ENCODE measurements at regions of chr15 and their contacts with region 1.

Region 1: GRCh38 chr15:51874751-51875528 is 45.5 kb downstream of the TMOD3 start:
- DNase-seq: peak in 1 of 2 donors; percentile 40
- ATAC-seq: peak in 7 of 8 donors; percentile 34 to 84 (median 76)
- H3K4me3 ChIP-seq: no peak overlapping the region
- H3K27ac ChIP-seq: peak overlapping the region in 7 of 10 donors; percentile 9 to 67 (median 54)
- H3K4me1 ChIP-seq: peaks cover 0 to 48% (median 28%) of the 10 kb centered on the region in 9 donors
- H3K27me3 ChIP-seq: no peaks in the 10 kb centered on the region
- CTCF ChIP-seq: no peak

Region 2: DNA sequence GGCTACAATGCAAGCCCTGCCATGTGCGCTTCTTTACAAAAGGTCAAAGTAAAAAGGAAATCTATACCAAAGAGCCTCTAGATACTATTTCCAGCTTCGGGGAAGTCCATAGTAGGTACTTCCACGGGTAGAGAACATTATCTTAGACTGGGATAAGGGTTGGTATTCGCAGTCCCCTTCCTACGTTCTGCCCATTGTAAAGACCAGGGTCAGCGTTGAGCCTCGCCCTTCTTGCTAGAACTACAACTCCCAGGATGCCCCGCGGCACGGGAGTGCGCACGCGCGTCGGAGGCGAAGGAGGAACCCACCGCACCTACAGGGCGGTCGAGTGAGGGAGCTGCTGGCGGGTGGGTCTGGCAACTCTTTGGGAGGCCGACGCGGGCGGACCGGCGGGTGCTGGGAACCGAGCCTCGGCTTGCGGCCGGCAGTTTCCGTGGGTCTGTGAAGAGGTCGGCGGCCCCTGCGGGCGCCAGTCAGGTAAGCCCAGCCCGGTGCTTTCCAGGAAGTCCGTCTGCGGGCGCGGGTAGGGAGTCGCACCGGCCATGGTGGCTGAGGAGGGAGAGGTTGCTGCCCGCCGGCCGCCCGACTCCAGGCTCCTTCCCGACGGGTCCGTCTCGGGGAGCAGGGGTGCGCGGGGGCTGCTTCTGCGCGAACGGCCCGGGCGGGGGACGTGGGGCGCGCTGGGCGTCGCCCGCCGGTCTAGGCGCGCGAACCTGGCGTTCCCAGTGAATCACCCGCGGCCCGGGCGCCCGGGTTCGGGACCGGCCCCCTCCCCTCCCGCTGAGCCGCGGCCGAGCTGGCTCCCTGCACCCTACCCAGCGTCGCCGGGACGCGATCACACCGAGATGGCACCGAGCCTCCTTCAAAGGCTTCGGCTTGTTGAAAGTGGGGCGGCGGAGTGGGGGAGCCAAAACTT is 45.3 kb before region 1 on chr15 and contains the start of gene TMOD3:
- intact Hi-C with region 1: loop called in 3 of 10 experiments (anchors 5 kb)
- DNase-seq: peak; percentile 92 to 97
- ATAC-seq: peak; percentile 97 to 99 (median 98)
- H3K4me3 ChIP-seq: peak within 1 kb of the TSS; percentile 77 to 99 (median 92)
- H3K27ac ChIP-seq: peak within 1 kb of the TSS; percentile 82 to 99 (median 95)
- H3K4me1 ChIP-seq: peaks cover 0 to 42% (median 38%) of the 10 kb centered on the region in 9 donors
- H3K27me3 ChIP-seq: no peaks in the 10 kb centered on the region
- CTCF ChIP-seq: peak in 2 of 9 donors; percentile 12 to 21
- total RNA-seq, gene TMOD3: 15.2 to 28.7 (median 18.2) TPM

Region 3: DNA sequence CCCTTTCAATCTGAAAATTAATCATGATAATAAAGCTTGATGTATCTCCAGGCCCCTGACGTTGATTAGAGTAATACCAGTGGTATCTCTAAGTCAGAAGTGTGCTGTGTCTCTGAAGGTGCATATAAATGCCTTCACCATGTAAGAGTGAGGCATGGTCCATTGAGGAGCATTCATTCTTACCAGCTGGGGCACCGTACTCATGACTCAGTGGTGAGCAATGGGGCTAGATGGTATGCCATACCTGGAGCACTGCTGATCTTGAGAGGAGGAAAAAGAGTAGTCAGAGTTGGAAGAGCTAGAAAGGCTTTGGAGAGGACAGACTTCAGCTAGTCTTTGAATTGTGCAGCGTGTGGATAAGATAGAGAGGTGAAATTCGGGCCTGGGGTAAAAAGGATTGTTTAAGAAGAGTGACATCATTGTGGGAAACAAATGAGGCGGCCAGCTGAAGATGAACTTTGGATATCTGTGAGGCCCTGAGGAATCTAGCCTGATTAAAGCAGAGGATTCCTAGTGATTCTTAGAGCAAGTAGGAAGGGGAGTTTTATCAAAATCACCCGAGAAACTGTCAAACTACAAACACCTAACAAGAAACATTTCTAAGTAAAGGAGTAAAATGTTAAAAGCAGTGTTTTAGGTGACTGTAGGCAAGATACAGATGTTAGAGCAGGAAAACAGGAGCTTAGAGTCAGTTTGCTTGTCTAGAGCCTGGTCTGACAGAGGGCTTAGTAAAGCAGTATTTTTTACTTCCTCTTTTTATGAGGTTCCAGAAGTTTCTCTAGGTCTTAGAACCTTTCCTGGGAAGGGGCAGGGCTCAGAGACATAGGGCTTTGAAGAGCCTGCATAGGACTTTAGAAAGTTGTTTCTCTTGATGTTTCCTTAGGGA is 31.8 kb before region 1 on chr15:
- intact Hi-C with region 1: loop called in 2 of 10 experiments (anchors 5 kb)
- DNase-seq: no peak
- ATAC-seq: peak in 2 of 8 donors; percentile 11 to 32
- H3K4me3 ChIP-seq: no peak overlapping the region
- H3K27ac ChIP-seq: peak overlapping the region in 3 of 10 donors; percentile 16 to 69 (median 34)
- H3K4me1 ChIP-seq: peaks cover 11 to 96% (median 75%) of the 10 kb centered on the region in 9 donors
- H3K27me3 ChIP-seq: no peaks in the 10 kb centered on the region
- CTCF ChIP-seq: no peak

Region 4: DNA sequence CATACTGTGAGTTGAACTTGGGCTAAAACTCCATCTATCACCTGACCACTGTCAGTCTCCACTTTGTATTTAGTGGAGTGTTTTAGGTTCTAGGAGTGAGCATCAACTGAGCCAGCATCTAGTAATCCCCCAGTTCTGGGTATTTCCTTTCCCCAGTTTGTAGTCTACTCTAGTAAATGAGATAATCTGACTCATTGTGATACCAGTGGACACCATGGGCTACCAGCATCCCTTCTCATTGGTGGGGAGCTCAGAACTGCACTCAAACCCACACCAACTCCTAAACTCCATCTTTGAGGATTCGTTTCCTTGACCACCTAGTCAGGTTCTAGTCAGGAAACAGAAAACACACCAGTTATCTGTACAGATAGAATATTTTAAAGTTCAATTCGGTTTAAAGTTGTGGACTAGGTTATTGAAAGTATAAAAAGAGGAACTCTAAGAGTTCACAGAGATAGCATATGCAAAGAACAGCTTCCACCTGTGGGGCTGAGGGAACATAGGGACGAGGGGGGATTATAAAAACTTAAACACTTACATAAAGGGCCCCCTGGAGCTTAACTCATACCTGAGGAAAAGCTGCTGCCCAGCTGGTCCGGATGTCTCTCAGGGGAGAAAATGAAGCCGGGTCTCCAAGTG is 60.6 kb after region 1 on chr15:
- intact Hi-C with region 1: no loop called
- DNase-seq: no peak
- ATAC-seq: no peak
- H3K4me3 ChIP-seq: no peak overlapping the region
- H3K27ac ChIP-seq: no peak overlapping the region
- H3K4me1 ChIP-seq: peaks cover 0 to 7% (median 0%) of the 10 kb centered on the region in 9 donors
- H3K27me3 ChIP-seq: no peaks in the 10 kb centered on the region
- CTCF ChIP-seq: no peak